ENCODE measurements at regions of chr1 and their contacts with region 1.

Region 1: GRCh38 chr1:156728597-156729462 is at the start of gene ISG20L2:
- DNase-seq: peak; percentile 94 to 99
- ATAC-seq: peak; percentile 87 to 89
- H3K4me3 ChIP-seq: peak within 1 kb of the TSS; percentile 89
- H3K27ac ChIP-seq: peak within 1 kb of the TSS; percentile 93
- H3K4me1 ChIP-seq: peaks cover 35% of the 10 kb centered on the region
- CTCF ChIP-seq: no peak
- EP300 ChIP-seq: no peak
- POLR2A ChIP-seq: peak; percentile 29
- RAD21 ChIP-seq: no peak
- polyA plus RNA-seq, gene ISG20L2: 42.5 and 55.7 TPM in 2 replicates

Region 2: GRCh38 chr1:156625436-156626078 is 103.3 kb before region 1 on chr1:
- CTCF ChIA-PET with region 1: interaction called, 16 read pairs
- POLR2A ChIA-PET with region 1: interaction called, 6 read pairs
- DNase-seq: peak in 1 of 2 experiments; percentile 61
- ATAC-seq: peak; percentile 27 to 64
- H3K4me3 ChIP-seq: peak overlapping the region; percentile 49
- H3K27ac ChIP-seq: peak overlapping the region; percentile 3 to 76; a peak in 3 of 6 replicates
- H3K4me1 ChIP-seq: peaks cover 12% of the 10 kb centered on the region
- CTCF ChIP-seq: peak; percentile 80
- EP300 ChIP-seq: no peak
- POLR2A ChIP-seq: no peak
- RAD21 ChIP-seq: peak; percentile 65 to 72

Region 3: GRCh38 chr1:156740679-156741612 is 12.1 kb after region 1 on chr1 and contains the start of gene MRPL24:
- CTCF ChIA-PET with region 1: interaction called, 130 read pairs
- POLR2A ChIA-PET with region 1: interaction called, 90 read pairs
- DNase-seq: peak; percentile 97 to 100
- ATAC-seq: peak; percentile 92 to 93
- H3K4me3 ChIP-seq: peak within 1 kb of the TSS; percentile 66
- H3K27ac ChIP-seq: peak within 1 kb of the TSS; percentile 88 to 94
- H3K4me1 ChIP-seq: peaks cover 30% of the 10 kb centered on the region
- CTCF ChIP-seq: no peak
- EP300 ChIP-seq: no peak
- POLR2A ChIP-seq: peak; percentile 57
- RAD21 ChIP-seq: no peak
- polyA plus RNA-seq, gene MRPL24: 170 and 246 TPM in 2 replicates

Region 4: GRCh38 chr1:156767101-156767878 is 38.5 kb after region 1 on chr1 and contains the start of gene PRCC:
- CTCF ChIA-PET with region 1: interaction called, 130 read pairs
- POLR2A ChIA-PET with region 1: interaction called, 43 read pairs
- DNase-seq: peak; percentile 90 to 100
- ATAC-seq: peak; percentile 97
- H3K4me3 ChIP-seq: peak within 1 kb of the TSS; percentile 83
- H3K27ac ChIP-seq: peak within 1 kb of the TSS; percentile 91 to 94
- H3K4me1 ChIP-seq: peaks cover 24% of the 10 kb centered on the region
- CTCF ChIP-seq: no peak
- EP300 ChIP-seq: no peak
- POLR2A ChIP-seq: peak; percentile 22
- RAD21 ChIP-seq: no peak
- polyA plus RNA-seq, gene PRCC: 52.0 and 65.3 TPM in 2 replicates

Region 5: GRCh38 chr1:156813750-156814570 is 85.1 kb after region 1 on chr1:
- CTCF ChIA-PET with region 1: interaction called, 12 read pairs
- POLR2A ChIA-PET with region 1: no interaction called
- DNase-seq: peak; percentile 73
- ATAC-seq: peak; percentile 83 to 91
- H3K4me3 ChIP-seq: peak overlapping the region; percentile 39
- H3K27ac ChIP-seq: peak overlapping the region; percentile 76 to 86
- H3K4me1 ChIP-seq: peaks cover 24% of the 10 kb centered on the region
- CTCF ChIP-seq: peak; percentile 59
- EP300 ChIP-seq: no peak
- POLR2A ChIP-seq: peak; percentile 60
- RAD21 ChIP-seq: peak; percentile 13 to 34; a peak in 2 of 5 replicates

Region 6: GRCh38 chr1:156860113-156860627 is 131.3 kb after region 1 on chr1:
- CTCF ChIA-PET with region 1: interaction called, 117 read pairs
- POLR2A ChIA-PET with region 1: interaction called, 10 read pairs
- DNase-seq: peak; percentile 48 to 70
- ATAC-seq: peak; percentile 73 to 87
- H3K4me3 ChIP-seq: peak overlapping the region; percentile 46
- H3K27ac ChIP-seq: peak overlapping the region in 1 of 2 experiments; percentile 59; a peak in 3 of 6 replicates
- H3K4me1 ChIP-seq: peaks cover 8% of the 10 kb centered on the region; the same call in 1 of the 3 replicates
- CTCF ChIP-seq: peak; percentile 96
- EP300 ChIP-seq: no peak
- POLR2A ChIP-seq: no peak
- RAD21 ChIP-seq: peak; percentile 79 to 92

Region 7: DNA sequence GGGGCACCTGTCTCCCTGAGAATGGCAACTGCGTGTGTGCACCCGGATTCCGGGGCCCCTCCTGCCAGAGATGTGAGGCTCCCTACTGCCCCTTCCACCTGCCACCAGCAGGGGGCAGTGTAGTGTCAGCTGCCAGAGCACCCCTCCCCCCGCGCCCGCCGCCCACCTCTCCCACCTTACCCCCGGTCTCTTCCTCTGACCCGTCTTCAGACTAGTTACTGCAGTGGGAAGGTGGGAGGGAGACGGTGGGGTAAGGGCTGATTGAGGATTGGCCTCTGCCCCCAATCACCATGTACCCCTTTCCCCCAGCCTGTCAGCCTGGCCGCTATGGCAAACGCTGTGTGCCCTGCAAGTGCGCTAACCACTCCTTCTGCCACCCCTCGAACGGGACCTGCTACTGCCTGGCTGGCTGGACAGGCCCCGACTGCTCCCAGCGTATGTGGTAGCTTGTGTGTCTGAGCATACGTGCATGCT is 181.5 kb after region 1 on chr1:
- CTCF ChIA-PET with region 1: interaction called, 16 read pairs
- POLR2A ChIA-PET with region 1: no interaction called
- DNase-seq: peak; percentile 43 to 66
- ATAC-seq: peak; percentile 52 to 78; a peak in 4 of 6 replicates
- H3K4me3 ChIP-seq: no peak overlapping the region
- H3K27ac ChIP-seq: peak overlapping the region in 1 of 2 experiments; percentile 52; a peak in 2 of 6 replicates
- H3K4me1 ChIP-seq: peaks cover 20% of the 10 kb centered on the region
- CTCF ChIP-seq: peak; percentile 83
- EP300 ChIP-seq: no peak
- POLR2A ChIP-seq: no peak
- RAD21 ChIP-seq: peak; percentile 37 to 50; a peak in 4 of 5 replicates